Heart right ventricle (tissue), 16 donors: ENCODE measurements at regions of chr11 and their contacts with region 1.

Region 1: GRCh38 chr11:62556108-62556871 is 9.7 kb upstream of the AHNAK start:
- DNase-seq: peak; percentile 84 to 88
- ATAC-seq: peak; percentile 58 to 73 (median 68)
- H3K4me3 ChIP-seq: peak overlapping the region in 3 of 10 donors; percentile 7 to 30 (median 13)
- H3K27ac ChIP-seq: peak overlapping the region; percentile 61 to 98 (median 92)
- H3K4me1 ChIP-seq: peaks cover 41 to 95% (median 80%) of the 10 kb centered on the region in 9 donors
- H3K27me3 ChIP-seq: no peaks in the 10 kb centered on the region
- CTCF ChIP-seq: no peak

Region 2: DNA sequence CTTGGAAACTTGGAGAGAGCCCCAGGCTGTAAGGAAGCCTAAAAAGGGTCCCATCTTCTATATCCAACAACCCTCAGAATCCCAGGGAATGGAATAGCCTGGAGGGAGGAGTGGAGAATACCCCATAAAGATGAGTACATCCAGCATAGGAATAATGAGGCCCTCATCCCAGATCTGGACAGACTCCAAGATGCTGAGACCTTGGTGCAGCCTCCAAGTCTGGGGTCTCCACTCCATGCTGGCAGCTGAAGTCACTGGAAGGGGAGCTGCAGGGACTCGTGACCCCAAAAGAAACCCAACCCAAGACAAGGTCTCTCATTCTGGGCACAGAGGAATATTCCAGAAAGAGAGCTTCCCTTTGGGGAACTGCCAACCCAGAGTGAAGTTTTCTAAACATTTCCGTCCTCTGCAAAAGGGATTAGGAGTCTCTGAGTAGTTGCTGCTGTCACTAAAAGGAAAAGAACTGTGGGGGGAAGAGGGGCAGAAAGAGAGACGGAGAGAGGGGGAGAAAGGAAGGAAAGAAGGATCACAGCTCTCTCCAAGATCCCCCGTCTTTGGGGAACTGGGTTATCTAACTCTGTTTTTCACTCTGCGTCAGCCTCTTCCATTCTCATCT is 136.9 kb before region 1 on chr11:
- intact Hi-C with region 1: loop called in 7 of 10 experiments (anchors 1 to 5 kb)
- DNase-seq: no peak
- ATAC-seq: peak in 4 of 8 donors; percentile 38 to 52 (median 48)
- H3K4me3 ChIP-seq: no peak overlapping the region
- H3K27ac ChIP-seq: peak overlapping the region in 9 of 10 donors; percentile 5 to 77 (median 46)
- H3K4me1 ChIP-seq: peaks cover 0 to 18% (median 10%) of the 10 kb centered on the region in 9 donors
- H3K27me3 ChIP-seq: no peaks in the 10 kb centered on the region
- CTCF ChIP-seq: no peak

Region 3: DNA sequence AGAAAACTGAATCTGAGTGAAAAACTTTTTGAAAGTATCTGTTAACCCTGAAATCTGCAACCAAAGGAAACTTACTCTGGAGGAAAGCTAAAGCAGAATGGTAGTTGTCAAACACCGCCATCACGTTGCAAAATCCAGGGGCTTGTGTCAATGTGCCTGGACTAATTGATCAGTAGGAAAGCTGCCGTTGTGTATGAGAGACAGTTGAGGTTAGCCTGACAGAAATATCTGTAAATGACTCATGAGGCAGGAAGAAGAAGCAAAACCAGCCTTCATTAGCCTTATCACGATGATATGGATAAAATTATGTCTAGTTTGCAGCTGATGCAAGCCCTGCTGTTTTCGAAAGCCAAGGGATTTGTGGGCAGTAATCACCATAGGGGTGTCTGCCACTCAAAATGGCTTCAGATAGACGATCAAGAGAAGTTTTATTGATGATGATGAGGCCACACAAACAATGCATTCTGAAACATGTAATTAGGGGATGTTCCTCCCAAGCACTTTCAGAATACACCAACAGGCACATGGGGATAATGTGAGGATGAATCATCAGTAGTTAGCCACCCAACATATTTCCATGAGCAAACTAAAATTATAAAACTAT is 128.6 kb before region 1 on chr11:
- intact Hi-C with region 1: loop called in 7 of 10 experiments (anchors 1 to 5 kb)
- DNase-seq: no peak
- ATAC-seq: no peak
- H3K4me3 ChIP-seq: no peak overlapping the region
- H3K27ac ChIP-seq: peak overlapping the region in 1 of 10 donors; percentile 72
- H3K4me1 ChIP-seq: peaks cover 0 to 75% (median 9%) of the 10 kb centered on the region in 9 donors
- H3K27me3 ChIP-seq: no peaks in the 10 kb centered on the region
- CTCF ChIP-seq: no peak

Region 4: GRCh38 chr11:62497132-62497915 is 59.0 kb before region 1 on chr11:
- intact Hi-C with region 1: loop called in 2 of 10 experiments (anchors 5 kb)
- DNase-seq: no peak
- ATAC-seq: peak in 3 of 8 donors; percentile 32 to 48 (median 39)
- H3K4me3 ChIP-seq: no peak overlapping the region
- H3K27ac ChIP-seq: no peak overlapping the region
- H3K4me1 ChIP-seq: peaks cover 1 to 53% (median 33%) of the 10 kb centered on the region in 9 donors
- H3K27me3 ChIP-seq: no peaks in the 10 kb centered on the region
- CTCF ChIP-seq: peak in 7 of 9 donors; percentile 27 to 55 (median 50)